ENCODE measurements at regions of chr5 and their contacts with region 1.

Region 1: DNA sequence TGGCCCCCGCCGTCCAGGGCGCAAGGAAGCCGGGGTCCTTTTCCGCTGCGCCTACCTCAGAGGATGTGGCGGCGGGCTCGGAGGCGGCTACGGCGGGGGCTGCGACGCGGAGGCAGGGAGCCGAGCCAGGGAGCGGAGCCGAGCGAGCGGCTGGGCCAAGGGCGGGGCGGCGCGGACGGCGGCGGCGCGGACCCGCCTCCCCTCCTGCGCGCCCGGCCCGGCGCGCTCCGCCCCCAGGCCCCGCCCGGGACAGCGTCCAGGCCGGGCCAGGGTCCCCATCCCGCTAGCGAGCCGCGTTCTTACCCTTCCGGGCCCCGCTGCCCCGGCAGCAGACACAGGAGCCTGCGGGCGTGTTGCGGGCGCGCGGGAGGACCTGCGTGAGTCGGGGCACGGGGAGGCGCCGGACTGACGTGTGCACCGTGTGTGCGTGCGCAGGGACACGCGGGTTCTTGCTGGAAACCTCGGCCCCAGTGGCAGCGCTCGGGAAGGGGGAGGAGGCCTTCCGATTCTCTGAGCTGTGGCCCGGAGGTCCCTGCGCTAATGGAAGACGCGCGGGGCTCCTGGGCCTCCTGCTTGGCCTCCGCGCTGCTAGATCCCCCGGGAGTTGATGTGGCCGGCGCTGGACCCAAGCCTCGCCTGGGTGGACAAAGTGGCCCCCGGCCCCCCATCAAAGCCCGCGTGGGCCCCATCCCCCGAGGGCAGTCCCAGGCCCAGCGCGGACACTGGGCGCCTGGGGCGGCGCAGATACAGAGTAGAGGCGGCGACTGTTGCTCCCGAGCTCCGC is at the start of gene VDAC1:
- DNase-seq: peak; percentile 95
- H3K4me3 Mint-ChIP-seq: peak within 1 kb of the TSS; percentile 93
- H3K27ac Mint-ChIP-seq: peak within 1 kb of the TSS; percentile 96
- H3K4me1 Mint-ChIP-seq: peaks cover 40% of the 10 kb centered on the region
- H3K27me3 Mint-ChIP-seq: no peaks in the 10 kb centered on the region
- total RNA-seq, gene VDAC1: 508 and 515 TPM in 2 replicates

Region 2: GRCh38 chr5:133527311-133527710 is 477.5 kb before region 1 on chr5:
- intact Hi-C with region 1: no loop called
- DNase-seq: no peak
- H3K4me3 Mint-ChIP-seq: no peak overlapping the region
- H3K27ac Mint-ChIP-seq: no peak overlapping the region
- H3K4me1 Mint-ChIP-seq: no peaks in the 10 kb centered on the region
- H3K27me3 Mint-ChIP-seq: peaks cover 3% of the 10 kb centered on the region

Region 3: DNA sequence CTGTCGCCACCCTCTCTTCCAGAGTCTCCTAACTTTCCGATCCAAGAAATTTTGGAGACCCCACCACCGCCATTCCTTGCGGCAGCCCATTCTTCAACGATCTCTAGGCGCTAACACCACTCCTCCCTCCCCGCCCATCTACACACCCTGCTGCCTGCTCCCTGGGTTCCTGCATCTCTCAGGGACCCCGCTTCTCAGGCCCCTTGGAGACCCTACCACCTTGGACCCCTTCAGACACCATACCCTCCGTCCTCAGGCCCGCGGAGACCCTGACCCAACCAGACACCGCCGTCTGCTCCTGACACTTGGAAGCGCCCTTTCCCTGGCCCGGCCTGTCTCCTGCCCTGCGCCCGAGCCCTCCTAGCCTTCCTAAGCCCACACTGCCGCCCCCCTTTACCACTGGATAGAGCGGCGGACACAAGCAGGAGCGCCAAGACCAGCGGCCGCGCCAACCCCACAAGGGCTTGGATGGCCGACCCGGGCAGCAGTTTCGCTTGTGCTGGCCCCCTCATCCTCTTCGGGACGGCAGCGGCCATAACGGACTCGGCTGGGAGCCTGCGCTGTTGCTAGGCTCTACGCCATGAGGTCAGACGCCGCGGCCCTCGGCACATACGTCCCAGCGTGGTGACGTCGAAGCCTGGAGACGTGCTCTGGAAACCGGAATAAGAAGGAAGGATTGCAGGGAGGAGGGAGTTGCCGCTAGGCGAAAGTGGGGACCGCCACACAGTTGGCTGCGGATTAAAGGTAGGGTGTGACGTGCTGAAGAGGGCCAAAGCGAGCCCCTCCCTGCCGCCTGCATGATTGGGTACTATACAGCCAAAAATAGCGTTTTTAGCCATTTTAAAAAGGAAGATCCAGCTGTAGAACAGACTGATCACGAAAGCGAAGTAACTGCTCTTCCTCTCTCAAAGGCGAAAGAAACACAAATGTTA is 36.5 kb before region 1 on chr5 and contains the start of gene C5orf15:
- intact Hi-C with region 1: loop called (anchors 1 kb)
- DNase-seq: peak; percentile 98
- H3K4me3 Mint-ChIP-seq: peak within 1 kb of the TSS; percentile 98
- H3K27ac Mint-ChIP-seq: peak within 1 kb of the TSS; percentile 95
- H3K4me1 Mint-ChIP-seq: peaks cover 43% of the 10 kb centered on the region
- H3K27me3 Mint-ChIP-seq: no peaks in the 10 kb centered on the region
- total RNA-seq, gene C5orf15: 41.4 and 45.0 TPM in 2 replicates

Region 4: DNA sequence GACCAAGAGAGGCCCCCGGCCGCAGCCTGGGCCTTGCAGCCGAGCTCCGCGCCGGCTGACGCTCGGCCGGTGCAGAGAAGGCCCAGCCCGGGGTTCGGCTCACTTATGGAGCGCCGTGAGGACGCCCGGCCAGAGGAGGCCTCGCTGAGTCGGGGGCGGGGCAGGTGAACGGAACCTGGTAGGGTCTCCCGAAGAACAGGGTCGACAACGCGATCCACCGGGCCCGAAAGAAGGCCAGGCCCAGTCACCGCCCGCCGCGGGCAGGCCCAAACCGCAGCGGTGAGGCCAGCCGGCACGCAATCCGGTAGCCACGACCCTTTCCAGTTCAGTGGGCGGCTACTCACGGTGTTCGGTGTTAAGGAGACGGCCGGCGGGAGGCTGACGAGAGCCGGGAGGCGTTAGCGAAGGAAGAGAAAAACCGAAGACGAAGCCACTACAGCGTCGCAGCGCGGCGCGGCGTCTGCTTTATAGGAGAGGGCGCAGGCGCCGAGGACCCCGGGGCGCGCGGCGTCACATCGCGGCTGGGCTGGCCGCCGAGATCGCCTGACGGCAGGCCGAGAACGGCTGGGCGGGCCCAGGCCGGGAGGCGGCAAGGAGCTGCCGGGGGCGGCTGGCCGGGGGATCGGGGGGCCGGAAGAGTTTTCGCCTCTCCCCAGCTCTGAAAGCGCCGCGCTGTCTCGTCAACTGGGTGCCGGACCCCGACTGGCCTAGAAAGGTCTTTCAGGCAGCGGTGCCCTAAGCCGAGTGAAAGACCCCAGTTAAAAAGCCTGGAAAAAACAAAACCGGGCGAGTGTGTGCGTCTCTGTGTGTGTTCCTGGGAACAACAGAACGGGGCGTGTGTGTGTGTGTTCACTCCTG is 172.0 kb after region 1 on chr5 and contains the start of gene SKP1:
- intact Hi-C with region 1: loop called (anchors 1 kb)
- DNase-seq: peak; percentile 96
- H3K4me3 Mint-ChIP-seq: peak within 1 kb of the TSS; percentile 93
- H3K27ac Mint-ChIP-seq: peak within 1 kb of the TSS; percentile 97
- H3K4me1 Mint-ChIP-seq: peaks cover 21% of the 10 kb centered on the region
- H3K27me3 Mint-ChIP-seq: no peaks in the 10 kb centered on the region
- total RNA-seq, gene SKP1: 266 and 289 TPM in 2 replicates